ENCODE measurements at regions of chr7 and their contacts with region 1.

Region 1: DNA sequence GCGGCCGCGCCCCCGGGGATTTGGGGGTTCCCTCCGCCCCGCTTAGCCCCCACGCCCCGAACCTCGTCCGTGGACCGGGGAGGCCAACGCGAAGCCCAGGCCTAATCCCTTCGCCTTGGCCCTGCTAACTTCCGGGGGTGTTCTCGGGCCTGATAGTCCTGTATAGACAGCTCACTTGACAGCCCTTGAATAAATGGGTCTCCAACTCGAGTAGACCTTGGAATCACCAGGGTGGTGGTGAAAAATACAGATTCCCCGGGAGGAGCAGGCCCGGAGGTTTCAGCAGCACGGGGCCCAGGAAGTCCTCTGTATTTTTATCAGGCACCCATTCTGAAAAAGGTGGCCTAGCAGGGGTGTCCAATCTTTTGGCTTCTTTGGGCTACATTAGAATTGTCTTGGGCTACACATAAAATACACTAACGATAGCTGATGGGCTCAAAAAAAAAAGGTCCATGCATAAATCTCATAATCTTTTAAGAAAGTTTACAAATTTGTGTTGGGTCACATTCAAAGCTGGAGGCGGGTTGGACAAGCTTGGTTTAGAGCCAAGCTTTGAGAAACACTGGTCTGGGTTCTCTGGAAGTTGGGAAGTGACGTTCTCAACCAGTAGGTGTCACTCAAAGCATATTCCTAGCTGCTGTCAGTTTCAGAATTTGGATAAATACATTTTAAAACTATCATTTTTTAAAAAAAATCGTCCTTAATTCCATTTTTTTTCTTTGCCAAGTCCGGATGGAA is 221.7 kb downstream of the PHTF2 start:
- DNase-seq: peak; percentile 77 to 88 (median 80)
- ATAC-seq: peak; percentile 82
- H3K4me3 ChIP-seq: 0 out of 2 replicates have a peak overlapping the region, but pooled peaks have one; percentile 47
- H3K27ac ChIP-seq: peak overlapping the region; percentile 63; the same call in 2 of the 3 replicates
- H3K4me1 ChIP-seq: peaks cover 18 to 26% of the 10 kb centered on the region in 2 experiments
- H3K27me3 ChIP-seq: peaks cover 4 to 7% of the 10 kb centered on the region in 2 experiments; a peak in 4 of 5 replicates
- CTCF ChIP-seq: peak; percentile 71 to 95 (median 78)
- EP300 ChIP-seq: no peak
- POLR2A ChIP-seq: no peak
- RAD21 ChIP-seq: peak; percentile 83 to 85

Region 2: GRCh38 chr7:77657427-77658224 is 362.7 kb before region 1 on chr7:
- CTCF ChIA-PET with region 1: no interaction called
- POLR2A ChIA-PET with region 1: no interaction called
- in situ Hi-C with region 1: no loop called
- intact Hi-C with region 1: loop called (anchors 10 kb)
- DNase-seq: peak; percentile 40 to 68 (median 46)
- ATAC-seq: peak; percentile 94
- H3K4me3 ChIP-seq: no peak overlapping the region
- H3K27ac ChIP-seq: no peak overlapping the region
- H3K4me1 ChIP-seq: no peaks in the 10 kb centered on the region
- H3K27me3 ChIP-seq: no peaks in the 10 kb centered on the region
- CTCF ChIP-seq: peak; percentile 62 to 86 (median 66); a peak in 5 of 6 replicates
- EP300 ChIP-seq: no peak
- POLR2A ChIP-seq: no peak
- RAD21 ChIP-seq: peak; percentile 94 to 95

Region 3: DNA sequence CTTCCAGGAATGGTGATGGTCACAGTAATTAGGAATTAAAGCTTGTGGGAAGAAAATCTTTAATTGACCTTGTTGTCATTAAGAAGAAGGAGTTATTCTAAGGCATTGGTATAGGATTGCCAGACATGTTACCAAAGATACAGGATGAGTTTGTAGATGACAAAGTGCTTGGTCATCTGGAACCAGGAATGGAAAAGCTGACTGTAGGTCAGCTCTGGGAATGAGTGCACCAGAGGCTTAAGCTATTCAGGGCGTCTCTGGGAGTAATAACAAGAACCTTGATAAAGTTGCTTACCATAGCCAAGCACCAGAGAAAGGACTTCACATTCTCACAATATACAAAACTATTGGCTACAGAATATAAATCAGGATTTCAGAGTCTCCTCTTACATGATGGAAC is 132.7 kb before region 1 on chr7:
- CTCF ChIA-PET with region 1: no interaction called
- POLR2A ChIA-PET with region 1: no interaction called
- in situ Hi-C with region 1: no loop called
- intact Hi-C with region 1: no loop called
- DNase-seq: no peak
- ATAC-seq: no peak
- H3K4me3 ChIP-seq: no peak overlapping the region
- H3K27ac ChIP-seq: no peak overlapping the region
- H3K4me1 ChIP-seq: no peaks in the 10 kb centered on the region
- H3K27me3 ChIP-seq: no peaks in the 10 kb centered on the region
- CTCF ChIP-seq: no peak
- EP300 ChIP-seq: no peak
- POLR2A ChIP-seq: no peak
- RAD21 ChIP-seq: no peak

Region 4: DNA sequence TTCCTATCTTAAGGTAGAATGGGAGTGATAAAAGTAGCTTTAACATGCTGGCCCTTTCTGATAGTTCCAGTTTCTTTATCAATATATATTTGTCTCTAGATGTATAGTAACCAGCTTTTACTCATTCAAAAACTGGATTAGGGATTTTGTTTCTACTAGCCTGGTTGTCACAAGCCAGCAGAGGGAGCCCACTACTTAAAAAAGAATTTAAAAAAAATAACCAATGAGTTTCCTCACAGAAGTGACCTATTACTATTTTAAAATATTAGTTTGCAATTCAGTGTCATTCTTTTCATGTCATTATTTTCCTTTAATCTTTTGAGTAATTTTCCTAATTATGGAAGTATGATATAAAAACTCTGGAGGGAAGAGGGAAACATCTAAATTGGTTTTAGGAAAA is 79.7 kb before region 1 on chr7:
- CTCF ChIA-PET with region 1: no interaction called
- POLR2A ChIA-PET with region 1: interaction called, 5 read pairs
- in situ Hi-C with region 1: no loop called
- intact Hi-C with region 1: loop called (anchors 2 kb)
- DNase-seq: peak; percentile 20 to 63 (median 38)
- ATAC-seq: peak; percentile 37
- H3K4me3 ChIP-seq: no peak overlapping the region
- H3K27ac ChIP-seq: no peak overlapping the region
- H3K4me1 ChIP-seq: peaks cover 12 to 20% of the 10 kb centered on the region in 2 experiments
- H3K27me3 ChIP-seq: no peaks in the 10 kb centered on the region
- CTCF ChIP-seq: peak; percentile 49 to 90 (median 57); a peak in 5 of 6 replicates
- EP300 ChIP-seq: no peak; the same call in 1 of the 2 replicates
- POLR2A ChIP-seq: no peak
- RAD21 ChIP-seq: peak; percentile 91 to 95

Region 5: GRCh38 chr7:78080811-78081210 is 60.5 kb after region 1 on chr7:
- CTCF ChIA-PET with region 1: no interaction called
- POLR2A ChIA-PET with region 1: no interaction called
- in situ Hi-C with region 1: no loop called
- intact Hi-C with region 1: loop called (anchors 2 kb)
- DNase-seq: no peak
- ATAC-seq: no peak
- H3K4me3 ChIP-seq: no peak overlapping the region
- H3K27ac ChIP-seq: no peak overlapping the region
- H3K4me1 ChIP-seq: no peaks in the 10 kb centered on the region
- H3K27me3 ChIP-seq: peaks cover 13 to 14% of the 10 kb centered on the region in 2 experiments
- CTCF ChIP-seq: no peak
- EP300 ChIP-seq: no peak
- POLR2A ChIP-seq: no peak
- RAD21 ChIP-seq: no peak

Region 6: GRCh38 chr7:78232806-78233205 is 212.5 kb after region 1 on chr7:
- CTCF ChIA-PET with region 1: no interaction called
- POLR2A ChIA-PET with region 1: no interaction called
- in situ Hi-C with region 1: no loop called
- intact Hi-C with region 1: no loop called
- DNase-seq: no peak
- ATAC-seq: no peak
- H3K4me3 ChIP-seq: no peak overlapping the region
- H3K27ac ChIP-seq: no peak overlapping the region
- H3K4me1 ChIP-seq: no peaks in the 10 kb centered on the region
- H3K27me3 ChIP-seq: no peaks in the 10 kb centered on the region
- CTCF ChIP-seq: no peak
- EP300 ChIP-seq: no peak
- POLR2A ChIP-seq: no peak
- RAD21 ChIP-seq: no peak

Region 7: GRCh38 chr7:78326876-78327275 is 306.6 kb after region 1 on chr7:
- CTCF ChIA-PET with region 1: no interaction called
- POLR2A ChIA-PET with region 1: no interaction called
- in situ Hi-C with region 1: no loop called
- intact Hi-C with region 1: no loop called
- DNase-seq: no peak
- ATAC-seq: no peak
- H3K4me3 ChIP-seq: no peak overlapping the region
- H3K27ac ChIP-seq: no peak overlapping the region
- H3K4me1 ChIP-seq: no peaks in the 10 kb centered on the region
- H3K27me3 ChIP-seq: no peaks in the 10 kb centered on the region
- CTCF ChIP-seq: no peak
- EP300 ChIP-seq: no peak
- POLR2A ChIP-seq: no peak
- RAD21 ChIP-seq: no peak

Region 8: DNA sequence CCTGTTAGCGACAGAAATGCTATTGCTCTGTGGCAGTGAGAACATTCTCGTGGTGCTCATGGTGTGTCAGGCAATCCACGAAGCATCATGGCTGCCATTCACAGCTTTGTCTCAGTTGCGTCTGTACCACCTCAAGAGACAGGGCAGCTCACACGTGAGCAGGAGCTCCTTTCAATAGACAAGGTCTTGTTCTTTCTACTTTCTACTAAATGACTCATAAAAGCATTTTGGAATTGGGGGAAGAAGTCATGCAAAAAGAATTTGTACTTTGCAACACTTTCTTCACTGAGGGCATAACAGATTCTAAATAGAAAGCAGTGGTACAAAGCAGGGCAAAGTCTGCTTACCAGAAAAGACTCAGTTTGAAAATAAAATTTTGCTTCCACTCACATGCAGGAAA is 416.8 kb after region 1 on chr7:
- CTCF ChIA-PET with region 1: no interaction called
- POLR2A ChIA-PET with region 1: no interaction called
- in situ Hi-C with region 1: no loop called
- intact Hi-C with region 1: loop called (anchors 10 kb)
- DNase-seq: no peak
- ATAC-seq: no peak
- H3K4me3 ChIP-seq: no peak overlapping the region
- H3K27ac ChIP-seq: no peak overlapping the region
- H3K4me1 ChIP-seq: no peaks in the 10 kb centered on the region
- H3K27me3 ChIP-seq: no peaks in the 10 kb centered on the region
- CTCF ChIP-seq: no peak
- EP300 ChIP-seq: no peak
- POLR2A ChIP-seq: no peak
- RAD21 ChIP-seq: no peak

Measured in K562 (cell line).